ENCODE measurements at regions of chr4 and their contacts with region 1.

Region 1: DNA sequence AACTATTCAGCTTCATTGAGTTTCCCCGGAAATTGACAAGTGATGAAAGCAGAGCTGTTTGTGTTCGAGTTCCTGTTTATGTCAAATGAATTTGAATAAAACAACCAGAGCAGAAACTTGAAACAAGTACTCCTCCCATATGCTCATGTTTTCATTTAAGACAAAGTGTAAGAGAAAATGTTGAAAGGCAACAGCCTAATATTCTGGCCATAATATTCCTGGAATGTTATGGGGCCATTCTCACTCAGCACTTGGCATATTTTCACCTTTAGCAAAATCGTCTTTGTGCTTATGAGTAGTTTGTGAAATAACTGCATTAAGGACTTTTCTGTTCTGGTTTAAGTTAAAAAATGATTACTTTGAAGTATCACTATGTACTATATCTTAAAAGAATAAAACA is 276.0 kb upstream of the FAT1 start:
- DNase-seq: no peak
- ATAC-seq: no peak
- H3K4me3 ChIP-seq: no peak overlapping the region
- H3K27ac ChIP-seq: no peak overlapping the region
- H3K4me1 ChIP-seq: no peaks in the 10 kb centered on the region
- H3K27me3 ChIP-seq: no peaks in the 10 kb centered on the region
- CTCF ChIP-seq: no peak
- POLR2A ChIP-seq: no peak

Region 2: GRCh38 chr4:186781032-186781917 is 218.4 kb before region 1 on chr4:
- intact Hi-C with region 1: loop called (anchors 5 kb)
- DNase-seq: peak in 1 of 4 donors; percentile 19
- ATAC-seq: no peak
- H3K4me3 ChIP-seq: no peak overlapping the region
- H3K27ac ChIP-seq: peak overlapping the region in 2 of 4 donors; percentile 35 to 55
- H3K4me1 ChIP-seq: peaks cover 5% of the 10 kb centered on the region
- H3K27me3 ChIP-seq: no peaks in the 10 kb centered on the region
- CTCF ChIP-seq: no peak
- POLR2A ChIP-seq: no peak

Region 3: GRCh38 chr4:187103351-187103750 is 103.7 kb after region 1 on chr4:
- intact Hi-C with region 1: no loop called
- DNase-seq: no peak
- ATAC-seq: no peak
- H3K4me3 ChIP-seq: no peak overlapping the region
- H3K27ac ChIP-seq: no peak overlapping the region
- H3K4me1 ChIP-seq: no peaks in the 10 kb centered on the region
- H3K27me3 ChIP-seq: no peaks in the 10 kb centered on the region
- CTCF ChIP-seq: no peak
- POLR2A ChIP-seq: no peak